ENCODE measurements at regions of chr14 and their contacts with region 1.

Region 1: DNA sequence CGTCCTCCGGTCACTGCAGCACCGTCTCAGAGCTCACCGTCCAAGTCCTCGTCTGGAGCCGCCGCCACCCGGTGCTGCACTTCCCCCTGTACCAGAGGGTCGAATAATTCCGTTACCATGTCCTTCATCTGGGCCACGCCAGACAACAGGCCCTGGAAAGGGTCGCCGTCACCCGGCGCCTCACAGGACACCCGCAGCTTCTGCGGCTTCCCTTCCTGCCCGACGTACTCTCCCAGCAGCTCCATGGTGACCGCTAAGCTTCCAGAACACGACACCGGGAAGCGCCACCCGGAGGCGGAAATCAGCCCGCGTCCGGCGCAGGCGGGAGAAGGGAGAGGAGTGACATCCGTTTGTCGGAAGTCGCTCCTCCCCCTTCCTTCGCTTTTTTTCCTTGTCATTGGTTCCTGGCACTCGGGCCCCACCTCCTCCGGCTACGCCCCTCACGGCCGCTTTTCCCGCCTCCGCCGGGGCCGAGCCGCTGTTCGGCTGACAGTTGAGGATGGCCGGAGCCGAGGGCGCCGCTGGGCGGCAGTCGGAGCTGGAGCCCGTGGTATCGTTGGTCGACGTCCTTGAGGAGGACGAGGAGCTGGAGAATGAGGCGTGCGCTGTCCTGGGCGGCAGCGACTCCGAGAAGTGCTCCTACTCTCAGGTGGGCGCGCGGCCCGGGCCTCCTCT is at the starts of genes GON7 and UBR7:
- DNase-seq: peak; percentile 91 to 99 (median 97)

Region 2: DNA sequence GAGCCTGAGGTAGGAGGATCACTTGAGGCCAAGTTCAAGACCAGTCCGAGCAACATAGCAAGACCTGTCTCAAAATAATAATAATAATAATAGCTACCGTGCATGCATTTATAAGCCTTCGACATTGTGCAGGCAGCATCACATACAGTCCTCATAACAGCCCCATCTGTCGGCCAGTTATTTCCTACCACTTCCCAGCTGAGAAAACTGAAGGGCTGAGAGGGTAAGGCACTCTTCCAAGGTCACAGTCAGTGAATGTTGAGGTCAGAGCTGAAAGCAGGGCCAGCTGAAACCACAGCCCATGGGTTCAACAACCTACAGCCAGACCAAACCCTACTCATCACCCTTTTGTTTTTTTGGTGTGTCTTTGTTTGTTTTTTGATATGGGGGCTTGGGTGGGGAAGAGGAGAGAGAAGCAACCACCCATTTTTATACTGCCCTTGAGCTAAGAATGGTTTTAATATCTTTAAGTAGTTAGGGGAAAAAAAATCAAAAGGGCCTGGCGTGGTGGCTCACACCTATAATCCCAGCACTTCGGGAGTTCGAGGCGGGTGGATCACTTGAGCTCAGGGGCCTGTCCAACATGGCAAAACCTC is 74.4 kb before region 1 on chr14:
- intact Hi-C with region 1: no loop called
- DNase-seq: peak in 30 of 42 donors; percentile 18 to 84 (median 47)

Region 3: GRCh38 chr14:93160353-93160801 is 46.6 kb before region 1 on chr14:
- intact Hi-C with region 1: no loop called
- DNase-seq: no peak

Region 4: DNA sequence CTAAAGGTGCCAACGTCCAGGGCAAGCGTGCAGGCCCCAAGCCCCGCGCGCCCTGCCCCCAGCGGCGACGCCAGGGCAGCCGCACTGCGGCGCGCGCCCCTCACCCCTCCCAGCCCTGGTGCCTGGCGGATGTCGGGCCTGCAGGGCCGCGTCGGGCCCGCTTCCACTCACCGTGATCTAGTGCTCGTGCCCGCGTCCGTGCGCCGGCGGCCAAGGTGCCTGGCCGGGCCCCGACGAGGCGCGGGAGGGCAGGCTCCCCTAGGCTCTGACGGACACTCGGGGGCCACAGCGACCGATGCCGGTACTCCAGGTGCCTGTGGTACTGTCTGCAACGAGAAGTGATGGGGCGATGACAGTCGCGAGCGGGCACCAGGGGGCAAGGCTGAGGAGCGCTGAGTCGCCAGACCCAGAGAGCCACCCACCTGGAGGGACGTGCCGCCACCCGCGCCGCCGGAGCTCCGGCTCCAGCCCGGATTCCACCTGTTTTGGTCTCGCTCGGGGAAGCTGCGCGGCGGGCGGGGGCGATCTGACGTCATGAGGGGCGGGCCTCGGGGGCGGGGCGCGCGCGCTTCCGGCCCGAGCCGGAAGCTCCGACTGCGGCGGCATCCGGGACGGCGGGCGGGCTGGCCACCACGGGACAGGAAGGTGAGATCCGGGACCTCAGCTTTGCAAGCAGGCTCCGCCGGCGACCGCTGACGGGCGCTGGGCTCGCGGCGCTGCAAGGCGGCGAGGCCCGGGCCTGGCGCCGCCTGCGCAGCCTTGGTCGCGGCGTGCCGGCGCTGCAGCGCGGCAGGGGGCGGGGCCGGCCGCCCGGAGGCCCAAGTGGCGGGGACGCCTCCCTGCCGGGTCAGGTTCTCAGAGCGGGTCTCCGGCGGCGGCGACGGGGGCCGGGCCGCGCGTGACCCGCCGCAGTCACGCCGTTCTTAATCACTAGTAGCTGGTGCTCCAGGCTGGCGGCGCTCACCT is 22.3 kb before region 1 on chr14 and contains the starts of genes LYSET and MOAP1:
- intact Hi-C with region 1: loop called (anchors 1 kb)
- DNase-seq: peak; percentile 74 to 95 (median 89)

Region 5: GRCh38 chr14:93332853-93333630 is 126.1 kb after region 1 on chr14 and contains the start of gene BTBD7:
- intact Hi-C with region 1: no loop called
- DNase-seq: peak; percentile 81 to 98 (median 95)

Region 6: GRCh38 chr14:93464271-93464670 is 257.3 kb after region 1 on chr14:
- intact Hi-C with region 1: no loop called
- DNase-seq: no peak

Measured in head of caudate nucleus (tissue), 42 donors.